ENCODE measurements at regions of chr11 and their contacts with region 1.

Region 1: GRCh38 chr11:119155733-119156492 is 7.1 kb downstream of the ABCG4 start:
- DNase-seq: no peak
- H3K4me3 ChIP-seq: no peak overlapping the region
- H3K27ac ChIP-seq: no peak overlapping the region
- H3K4me1 ChIP-seq: no peaks in the 10 kb centered on the region
- H3K27me3 ChIP-seq: no peaks in the 10 kb centered on the region
- CTCF ChIP-seq: no peak

Region 2: DNA sequence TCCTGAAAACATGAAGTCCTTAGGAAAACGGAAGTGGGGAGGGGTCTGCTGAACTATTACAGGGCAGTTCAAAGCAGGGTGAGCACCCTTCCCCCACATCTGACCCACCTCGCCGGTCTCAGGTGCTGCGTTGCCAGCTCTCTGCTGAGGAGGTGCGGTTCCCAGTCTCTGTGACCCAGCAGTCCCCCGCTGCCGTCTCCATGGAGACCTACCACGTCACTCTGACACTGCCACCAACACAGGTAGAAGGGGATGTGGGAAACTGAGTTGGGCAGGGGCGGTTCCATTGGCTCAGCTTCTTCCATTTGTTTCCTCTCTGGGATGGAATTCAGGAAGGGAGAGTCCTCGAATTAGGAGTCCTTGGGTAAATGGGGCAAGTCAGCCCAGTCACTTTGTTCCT is 45.5 kb before region 1 on chr11:
- CTCF ChIA-PET with region 1: no interaction called
- dilution Hi-C with region 1: loop called (anchors 5 kb)
- in situ Hi-C with region 1: no loop called
- intact Hi-C with region 1: no loop called
- DNase-seq: no peak
- H3K4me3 ChIP-seq: no peak overlapping the region
- H3K27ac ChIP-seq: no peak overlapping the region
- H3K4me1 ChIP-seq: peaks cover 16% of the 10 kb centered on the region
- H3K27me3 ChIP-seq: no peaks in the 10 kb centered on the region
- CTCF ChIP-seq: no peak

Region 3: GRCh38 chr11:119249671-119250010 is 93.7 kb after region 1 on chr11:
- CTCF ChIA-PET with region 1: no interaction called
- dilution Hi-C with region 1: loop called (anchors 10 kb)
- in situ Hi-C with region 1: no loop called
- intact Hi-C with region 1: no loop called
- DNase-seq: no peak
- H3K4me3 ChIP-seq: no peak overlapping the region
- H3K27ac ChIP-seq: no peak overlapping the region
- H3K4me1 ChIP-seq: no peaks in the 10 kb centered on the region
- H3K27me3 ChIP-seq: no peaks in the 10 kb centered on the region
- CTCF ChIP-seq: no peak

Region 4: DNA sequence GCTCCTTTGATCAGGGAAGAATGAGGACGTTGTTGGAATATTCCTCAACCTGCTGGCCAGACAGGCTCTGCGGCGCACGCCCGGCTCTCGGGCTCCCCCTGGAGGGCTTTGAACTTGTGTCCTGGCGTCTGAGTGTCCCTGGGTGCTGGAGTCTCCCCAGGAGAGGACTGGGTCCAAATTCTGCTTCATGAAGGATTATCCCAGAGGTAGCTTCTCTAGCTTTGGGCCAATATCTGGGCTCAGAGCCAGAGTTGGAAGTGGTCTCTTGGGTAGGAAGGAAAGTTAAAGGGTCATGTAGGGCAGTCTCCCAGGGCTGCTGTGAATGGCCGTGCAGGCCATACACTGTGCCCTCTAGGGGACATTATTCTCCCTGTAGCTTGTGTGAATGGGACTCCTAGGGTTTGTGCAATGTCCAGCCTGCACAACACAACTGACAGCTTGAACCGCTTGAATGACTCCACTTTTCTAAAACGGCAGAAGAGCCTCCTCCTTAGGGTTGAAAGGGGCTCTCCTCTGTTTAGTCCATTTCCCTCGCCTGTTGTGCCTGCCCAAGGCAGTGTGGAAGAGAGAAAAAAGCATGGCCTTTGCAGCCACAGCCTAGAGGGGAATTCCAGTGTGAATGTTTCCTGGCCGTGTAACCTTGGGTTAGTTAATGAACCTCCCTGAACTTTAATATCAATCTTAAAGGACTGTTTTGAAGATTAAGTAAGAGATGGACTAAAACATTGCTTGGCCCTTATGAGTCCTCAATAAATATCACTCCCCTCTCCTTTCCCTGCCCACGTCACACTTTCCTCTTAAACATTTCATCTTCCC is 378.2 kb after region 1 on chr11:
- CTCF ChIA-PET with region 1: no interaction called
- dilution Hi-C with region 1: no loop called
- in situ Hi-C with region 1: no loop called
- intact Hi-C with region 1: no loop called
- DNase-seq: peak; percentile 57
- H3K4me3 ChIP-seq: no peak overlapping the region
- H3K27ac ChIP-seq: no peak overlapping the region
- H3K4me1 ChIP-seq: no peaks in the 10 kb centered on the region
- H3K27me3 ChIP-seq: peaks cover 1% of the 10 kb centered on the region
- CTCF ChIP-seq: peak; percentile 62 to 95

Measured in mammary epithelial cell (primary cell).